ENCODE measurements at regions of chr1 and their contacts with region 1.

Region 1: DNA sequence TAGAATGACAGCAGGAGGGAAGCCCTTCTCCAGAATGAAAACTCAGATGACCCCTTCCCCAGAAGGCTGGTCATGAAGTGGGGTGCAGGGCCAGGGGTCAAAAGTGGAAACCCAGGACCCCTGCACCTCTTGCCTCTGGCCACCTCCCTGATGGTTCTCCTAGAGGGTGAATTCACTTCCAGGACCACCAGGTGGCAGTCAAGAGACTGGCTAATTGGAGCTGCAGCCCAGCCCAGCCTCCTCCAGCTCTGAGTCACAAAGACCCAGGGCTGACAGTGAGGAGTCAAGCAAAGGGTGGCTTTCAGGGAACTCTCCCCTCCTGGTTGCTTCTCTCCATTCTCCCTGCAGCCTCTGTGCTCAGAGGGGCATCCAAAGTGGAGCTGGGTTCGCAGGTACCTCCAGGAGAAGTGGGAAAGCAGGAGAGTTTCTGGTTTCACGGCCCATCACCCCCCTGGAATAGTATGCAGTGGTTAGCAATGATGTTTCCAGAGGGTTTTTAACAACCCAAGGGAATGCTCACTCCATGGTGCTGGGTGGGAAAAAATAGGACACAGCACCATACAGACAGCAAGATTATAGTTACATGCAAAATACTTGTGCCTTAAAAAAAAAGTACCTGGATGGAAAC is 6.1 kb upstream of the EPHB2 start:
- DNase-seq: peak; percentile 84
- H3K4me3 ChIP-seq: no peak overlapping the region
- H3K27ac ChIP-seq: no peak overlapping the region
- H3K4me1 ChIP-seq: peaks cover 0 to 26% (median 8%) of the 10 kb centered on the region in 6 donors
- H3K27me3 ChIP-seq: peaks cover 0 to 9% (median 1%) of the 10 kb centered on the region in 7 donors
- CTCF ChIP-seq: peak; percentile 46 to 92 (median 83)
- POLR2A ChIP-seq: no peak

Region 2: DNA sequence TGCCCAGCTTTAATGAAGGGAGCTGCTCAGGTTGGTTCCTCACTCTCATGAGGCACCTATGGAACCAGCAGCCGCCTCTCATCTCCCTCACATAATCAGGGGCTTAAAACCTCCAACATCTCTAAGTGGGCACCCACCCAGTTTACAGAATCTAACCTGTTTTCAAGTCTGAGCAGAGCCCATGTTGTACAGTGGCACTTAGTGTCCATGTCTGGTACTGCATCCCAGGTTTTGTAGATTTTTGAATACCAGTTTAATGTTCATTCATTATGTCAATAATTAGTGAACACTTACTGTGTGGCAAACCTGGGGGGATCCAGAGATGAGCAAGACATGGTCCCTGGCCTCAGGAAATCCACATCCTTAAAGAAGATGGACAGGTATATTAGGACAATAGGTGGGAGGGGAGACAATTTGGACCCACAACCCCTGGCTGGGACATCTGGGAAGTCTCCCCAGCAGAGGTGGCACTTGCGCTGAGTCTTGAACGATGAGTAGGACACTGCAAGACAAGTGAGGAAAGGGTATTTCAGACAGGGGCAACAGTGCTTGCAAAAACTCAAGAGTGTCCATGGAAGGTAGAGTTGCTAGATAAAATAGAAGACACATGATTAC is 184.8 kb after region 1 on chr1:
- intact Hi-C with region 1: loop called (anchors 10 kb)
- DNase-seq: no peak
- H3K4me3 ChIP-seq: no peak overlapping the region
- H3K27ac ChIP-seq: no peak overlapping the region
- H3K4me1 ChIP-seq: peaks cover 5 to 18% (median 7%) of the 10 kb centered on the region in 6 donors
- H3K27me3 ChIP-seq: no peaks in the 10 kb centered on the region
- CTCF ChIP-seq: peak; percentile 30 to 67 (median 53)
- POLR2A ChIP-seq: no peak

Region 3: GRCh38 chr1:22930235-22930912 is 225.8 kb after region 1 on chr1:
- intact Hi-C with region 1: loop called (anchors 10 kb)
- DNase-seq: peak; percentile 57
- H3K4me3 ChIP-seq: no peak overlapping the region
- H3K27ac ChIP-seq: no peak overlapping the region
- H3K4me1 ChIP-seq: no peaks in the 10 kb centered on the region
- H3K27me3 ChIP-seq: peaks cover 0 to 6% (median 0%) of the 10 kb centered on the region in 7 donors
- CTCF ChIP-seq: peak; percentile 36 to 74 (median 63)
- POLR2A ChIP-seq: no peak